ENCODE measurements at regions of chr4 and their contacts with region 1.

Region 1: GRCh38 chr4:10734697-10735096 is 50.1 kb upstream of the CLNK start:
- DNase-seq: no peak
- ATAC-seq: no peak
- H3K4me3 Mint-ChIP-seq: no peak overlapping the region
- H3K27ac Mint-ChIP-seq: no peak overlapping the region
- H3K4me1 Mint-ChIP-seq: peaks cover 9% of the 10 kb centered on the region
- H3K27me3 Mint-ChIP-seq: no peaks in the 10 kb centered on the region; the same call in 1 of the 2 replicates
- CTCF ChIP-seq: no peak

Region 2: GRCh38 chr4:10706236-10706635 is 28.5 kb before region 1 on chr4:
- CTCF ChIA-PET with region 1: no interaction called
- POLR2A ChIA-PET with region 1: no interaction called
- DNase-seq: no peak
- ATAC-seq: no peak
- H3K4me3 Mint-ChIP-seq: no peak overlapping the region
- H3K27ac Mint-ChIP-seq: no peak overlapping the region
- H3K4me1 Mint-ChIP-seq: no peaks in the 10 kb centered on the region
- H3K27me3 Mint-ChIP-seq: no peaks in the 10 kb centered on the region; the same call in 1 of the 2 replicates
- CTCF ChIP-seq: no peak

Region 3: DNA sequence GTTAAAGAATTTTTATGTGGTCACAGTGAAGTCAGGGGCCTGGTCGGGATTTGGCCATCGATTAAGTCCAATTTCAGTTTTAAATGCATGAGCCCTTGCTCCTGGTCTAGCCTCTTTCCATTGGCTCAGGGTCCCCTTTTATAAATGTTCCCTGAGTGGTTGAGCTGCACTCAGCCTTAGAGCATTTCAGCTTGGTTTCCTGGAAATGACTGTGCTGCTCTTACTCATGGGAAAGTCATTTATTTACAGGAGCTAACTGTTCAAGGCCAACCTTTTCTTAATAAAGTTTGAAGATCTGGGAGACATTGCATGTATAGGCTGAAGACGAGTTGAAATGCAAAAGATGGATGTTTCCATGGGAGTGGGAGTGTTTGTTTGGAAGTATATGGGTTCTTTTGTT is 48.7 kb after region 1 on chr4:
- CTCF ChIA-PET with region 1: no interaction called
- POLR2A ChIA-PET with region 1: interaction called, 12 read pairs
- DNase-seq: no peak
- ATAC-seq: no peak
- H3K4me3 Mint-ChIP-seq: no peak overlapping the region
- H3K27ac Mint-ChIP-seq: no peak overlapping the region
- H3K4me1 Mint-ChIP-seq: no peaks in the 10 kb centered on the region
- H3K27me3 Mint-ChIP-seq: peaks cover 5% of the 10 kb centered on the region
- CTCF ChIP-seq: no peak

Region 4: DNA sequence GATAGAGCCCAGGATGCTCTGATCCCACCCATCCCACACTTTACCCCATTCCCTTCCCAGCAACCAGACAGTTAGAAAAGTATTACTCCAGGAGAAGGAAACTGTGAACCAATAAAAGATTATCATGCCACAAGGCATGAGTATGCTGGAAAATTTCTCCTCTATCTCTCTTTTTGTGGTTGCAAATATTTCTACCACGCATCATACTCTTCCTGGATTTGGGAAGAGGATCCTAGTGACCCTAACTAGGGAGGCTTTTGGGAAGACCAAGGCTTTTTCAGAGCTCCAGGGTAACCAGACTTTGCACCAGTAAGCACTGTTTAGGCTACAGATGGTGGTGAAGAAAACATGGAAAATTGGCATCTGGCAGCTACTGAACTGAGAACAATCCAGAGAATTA is 207.5 kb after region 1 on chr4:
- CTCF ChIA-PET with region 1: no interaction called
- POLR2A ChIA-PET with region 1: no interaction called
- DNase-seq: no peak
- ATAC-seq: no peak
- H3K4me3 Mint-ChIP-seq: no peak overlapping the region
- H3K27ac Mint-ChIP-seq: no peak overlapping the region
- H3K4me1 Mint-ChIP-seq: no peaks in the 10 kb centered on the region
- H3K27me3 Mint-ChIP-seq: peaks cover 15% of the 10 kb centered on the region
- CTCF ChIP-seq: no peak